ENCODE measurements at regions of chr12 and their contacts with region 1.

Region 1: GRCh38 chr12:11922361-11922760 is 148.4 kb upstream of the BCL2L14 start:
- DNase-seq: no peak
- H3K4me3 Mint-ChIP-seq: no peak overlapping the region
- H3K27ac Mint-ChIP-seq: no peak overlapping the region
- H3K4me1 Mint-ChIP-seq: peaks cover 9% of the 10 kb centered on the region
- H3K27me3 Mint-ChIP-seq: no peaks in the 10 kb centered on the region

Region 2: GRCh38 chr12:11049674-11050531 is 872.5 kb before region 1 on chr12:
- CTCF ChIA-PET with region 1: no interaction called
- intact Hi-C with region 1: no loop called
- DNase-seq: no peak
- H3K4me3 Mint-ChIP-seq: no peak overlapping the region
- H3K27ac Mint-ChIP-seq: no peak overlapping the region
- H3K4me1 Mint-ChIP-seq: peaks cover 2% of the 10 kb centered on the region
- H3K27me3 Mint-ChIP-seq: no peaks in the 10 kb centered on the region

Region 3: DNA sequence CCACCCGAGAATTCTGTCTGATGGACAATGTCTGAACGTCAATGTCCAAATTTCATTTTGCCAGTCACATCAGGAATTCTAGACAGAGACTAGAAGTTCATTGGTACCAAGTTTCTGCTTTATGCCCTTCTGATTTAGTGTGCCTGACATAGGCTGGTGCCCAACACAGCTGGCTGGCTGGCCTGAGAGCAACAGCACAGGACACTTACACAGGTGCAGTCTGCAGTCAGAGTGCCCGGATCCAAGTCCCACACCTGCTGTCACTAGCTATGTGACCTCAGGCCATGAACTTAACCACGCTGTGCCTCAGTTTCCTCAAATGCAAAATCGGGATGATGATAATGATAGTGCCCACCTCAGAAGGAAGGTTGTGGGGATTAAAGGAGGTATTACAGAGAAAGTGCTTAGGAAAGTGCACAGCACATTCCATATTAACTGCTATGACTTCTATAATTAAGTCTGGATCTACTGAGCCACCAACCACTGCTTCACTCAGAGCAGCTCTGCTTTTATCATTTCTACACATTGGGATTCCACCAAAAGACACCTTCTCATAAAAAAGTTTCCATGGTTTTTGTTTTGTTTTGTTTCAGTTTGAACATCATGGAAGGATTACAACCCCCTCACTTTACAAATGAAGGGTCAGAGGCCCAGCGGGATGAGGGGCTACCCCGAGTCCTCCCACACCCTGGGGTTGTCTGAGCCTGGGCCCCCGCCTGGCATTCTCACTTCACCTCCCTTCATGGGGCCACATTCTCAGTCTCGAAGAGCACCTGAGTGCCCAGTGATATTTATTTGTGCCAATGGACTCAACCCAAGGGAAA is 20.4 kb before region 1 on chr12:
- CTCF ChIA-PET with region 1: no interaction called
- intact Hi-C with region 1: loop called (anchors 1 kb)
- DNase-seq: peak; percentile 56
- H3K4me3 Mint-ChIP-seq: peak overlapping the region; percentile 54
- H3K27ac Mint-ChIP-seq: peak overlapping the region; percentile 79
- H3K4me1 Mint-ChIP-seq: peaks cover 35% of the 10 kb centered on the region
- H3K27me3 Mint-ChIP-seq: no peaks in the 10 kb centered on the region